GM10248 (cell line): ENCODE measurements at regions of chr12 and their contacts with region 1.

Region 1: DNA sequence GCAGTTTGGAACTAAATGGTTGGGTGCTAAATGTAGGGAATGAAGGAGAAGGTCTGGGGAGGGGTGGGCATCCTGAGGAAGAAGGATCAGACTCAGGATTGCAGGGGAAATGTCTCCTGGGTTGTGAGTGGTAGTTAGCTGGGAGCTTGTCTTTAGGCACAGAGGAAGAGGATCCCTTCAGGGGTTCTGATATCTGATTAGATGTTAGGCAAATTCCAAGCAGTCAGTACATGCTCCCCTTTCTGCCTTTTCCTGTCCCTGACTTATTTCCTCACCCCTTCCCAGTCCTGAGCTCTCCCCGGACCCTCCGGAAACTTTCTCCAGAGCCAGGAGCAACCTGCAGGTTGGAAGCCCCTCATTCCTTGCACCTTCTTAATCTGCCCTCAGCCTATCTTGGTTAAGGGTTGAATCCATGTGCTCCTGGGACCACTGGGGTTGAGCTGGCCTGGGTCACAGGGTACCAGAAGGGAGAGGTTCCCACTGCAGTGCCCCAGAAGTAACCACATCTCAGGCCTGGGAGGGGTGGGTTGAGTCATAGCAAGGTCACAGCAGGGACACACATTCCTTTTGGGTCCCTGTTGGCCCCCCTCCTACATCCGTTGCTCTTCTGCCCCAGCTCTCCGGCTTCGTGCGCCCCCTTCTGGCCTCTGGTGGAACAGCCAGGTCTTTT is 1.6 kb downstream of the IGFBP6 start:
- DNase-seq: peak; percentile 86
- CTCF ChIP-seq: peak; percentile 93

Region 2: DNA sequence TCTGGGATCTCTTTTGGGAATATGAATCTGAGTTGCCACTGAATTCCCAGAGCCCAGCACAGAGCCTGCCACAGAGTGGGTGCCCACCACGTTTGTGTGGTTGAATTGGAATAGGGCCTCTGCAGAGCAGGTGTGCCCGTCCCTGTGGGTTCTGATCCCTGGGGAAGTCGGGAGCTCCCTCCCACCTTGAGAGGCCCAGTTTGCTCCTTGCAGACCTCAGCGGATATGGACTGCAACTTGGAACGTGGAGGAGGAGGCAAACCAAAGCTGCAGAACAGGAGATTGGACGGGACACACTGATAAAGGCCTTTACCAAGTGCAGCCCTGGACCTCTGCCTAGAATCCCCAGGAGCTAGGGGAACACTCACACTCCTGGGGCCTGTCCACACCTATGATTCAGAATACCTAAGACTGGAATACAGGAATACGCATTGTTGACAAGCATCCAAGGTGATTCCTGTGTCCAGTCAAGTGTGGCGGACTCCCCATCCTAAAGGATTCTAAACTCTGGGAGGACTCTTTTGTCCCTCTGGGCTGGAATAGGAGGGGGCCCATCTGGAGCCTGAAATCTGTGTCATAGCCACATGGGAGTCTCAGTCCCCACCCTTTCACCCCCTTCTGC is 324.4 kb before region 1 on chr12:
- CTCF ChIA-PET with region 1: no interaction called
- POLR2A ChIA-PET with region 1: no interaction called
- DNase-seq: no peak
- CTCF ChIP-seq: no peak

Region 3: DNA sequence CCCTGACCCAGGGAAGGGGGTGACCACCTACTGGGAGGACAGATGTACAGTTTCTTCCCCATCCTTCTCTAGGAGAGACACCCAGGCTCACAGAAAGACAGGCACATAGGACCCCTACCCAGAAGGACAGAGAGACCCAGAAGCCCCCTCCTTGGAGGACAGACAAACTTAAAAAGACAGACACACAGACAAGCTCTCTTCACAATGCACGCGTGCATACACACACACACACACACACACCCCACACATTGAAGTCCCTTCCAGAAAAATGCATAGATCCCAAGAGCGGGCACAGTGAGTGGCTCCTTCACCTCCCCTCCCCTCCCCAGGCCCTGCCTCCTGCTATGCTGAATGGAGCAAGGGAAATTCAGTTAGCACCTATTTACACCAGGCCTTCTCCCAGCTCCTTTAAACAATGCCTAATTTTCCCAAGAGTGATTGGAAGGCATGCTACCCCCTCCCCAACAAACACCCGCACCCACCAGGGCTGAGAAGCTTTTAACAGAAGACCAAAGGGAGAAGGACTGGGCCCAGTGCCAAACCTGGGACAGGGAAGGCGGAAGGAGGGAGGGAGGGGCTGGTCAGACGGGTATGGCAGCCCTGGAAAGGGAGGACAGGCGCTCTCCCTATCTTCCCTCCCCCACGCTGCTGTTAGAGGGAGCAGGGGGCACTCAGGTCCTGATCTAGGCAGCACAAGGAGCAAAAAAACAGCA is 192.2 kb before region 1 on chr12:
- CTCF ChIA-PET with region 1: no interaction called
- POLR2A ChIA-PET with region 1: no interaction called
- DNase-seq: no peak
- CTCF ChIP-seq: no peak

Region 4: GRCh38 chr12:52949413-52950331 is 149.4 kb before region 1 on chr12:
- CTCF ChIA-PET with region 1: no interaction called
- POLR2A ChIA-PET with region 1: no interaction called
- DNase-seq: no peak
- CTCF ChIP-seq: no peak

Region 5: GRCh38 chr12:52992699-52993557 is 106.2 kb before region 1 on chr12:
- CTCF ChIA-PET with region 1: no interaction called
- POLR2A ChIA-PET with region 1: no interaction called
- DNase-seq: no peak
- CTCF ChIP-seq: no peak

Region 6: GRCh38 chr12:53079226-53080117 is 19.6 kb before region 1 on chr12 and contains the start of gene SPRYD3:
- CTCF ChIA-PET with region 1: interaction called, 294 read pairs
- POLR2A ChIA-PET with region 1: interaction called, 5 read pairs
- DNase-seq: peak; percentile 100
- CTCF ChIP-seq: no peak

Region 7: DNA sequence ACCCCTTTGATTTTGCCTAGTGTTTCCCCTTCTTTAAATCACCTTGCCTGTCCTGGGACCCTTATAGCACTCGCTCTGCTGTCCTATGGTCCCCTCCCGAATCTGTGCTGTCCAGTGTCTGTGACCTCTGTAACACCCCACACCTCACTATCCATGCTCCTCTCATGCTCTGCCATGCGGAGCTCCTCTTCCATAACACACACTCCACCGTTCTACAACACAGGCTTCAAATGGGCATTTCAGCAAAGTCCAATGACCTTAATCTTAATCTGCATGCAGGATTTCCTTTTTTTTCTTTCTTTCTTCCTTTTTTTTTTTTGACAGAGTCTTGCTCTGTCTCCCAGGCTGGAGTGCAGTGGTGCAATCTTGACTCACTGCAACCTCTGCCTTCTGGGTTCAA is 30.1 kb after region 1 on chr12:
- CTCF ChIA-PET with region 1: interaction called, 11 read pairs
- POLR2A ChIA-PET with region 1: no interaction called
- DNase-seq: no peak
- CTCF ChIP-seq: no peak